ENCODE measurements at regions of chr7 and their contacts with region 1.

Region 1: DNA sequence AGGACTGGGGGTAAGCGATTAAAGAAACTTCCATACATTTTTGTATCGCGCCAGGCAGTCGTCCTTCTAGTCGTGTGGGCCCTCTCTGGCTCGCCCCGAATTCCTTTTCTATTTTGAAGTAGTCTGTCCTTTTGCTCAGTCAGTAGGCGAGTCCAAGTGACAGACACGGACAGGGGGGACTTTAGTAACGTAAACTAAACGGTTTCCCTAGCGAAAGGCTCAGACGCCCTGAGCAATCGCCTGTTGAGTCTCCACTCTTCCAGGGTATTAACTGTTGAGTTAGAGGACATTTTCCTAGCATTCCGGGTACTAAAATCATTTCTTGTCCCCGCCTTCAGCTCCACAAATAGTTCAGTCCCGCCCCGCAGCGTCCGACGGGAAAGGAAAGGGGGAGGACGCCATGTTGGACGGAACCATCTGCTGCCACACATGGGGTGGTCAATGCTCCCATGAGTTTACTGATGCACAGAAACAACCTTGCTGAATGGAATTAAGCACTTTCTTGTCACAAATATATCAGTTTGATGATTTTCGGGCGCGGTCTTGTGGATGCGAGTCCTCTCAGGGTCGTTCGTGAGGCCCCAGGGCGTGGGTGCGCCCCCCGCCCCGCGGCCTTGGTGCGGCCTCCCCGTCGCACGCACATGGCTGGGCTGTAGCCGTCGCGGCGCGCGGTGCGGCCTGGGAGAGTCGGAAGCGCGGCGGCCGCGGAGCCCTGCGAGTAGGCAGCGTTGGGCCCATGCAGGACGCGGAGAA is at the start of gene EIF3B:
- DNase-seq: peak; percentile 87
- H3K4me3 ChIP-seq: peak within 1 kb of the TSS; percentile 100
- H3K27ac ChIP-seq: peak within 1 kb of the TSS; percentile 92
- H3K4me1 ChIP-seq: peaks cover 15% of the 10 kb centered on the region
- H3K27me3 ChIP-seq: no peaks in the 10 kb centered on the region
- CTCF ChIP-seq: no peak
- total RNA-seq, gene EIF3B: 94.4 to 180 TPM

Region 2: GRCh38 chr7:1579481-1580421 is 774.6 kb before region 1 on chr7:
- intact Hi-C with region 1: loop called (anchors 10 kb)
- DNase-seq: peak; percentile 75
- H3K4me3 ChIP-seq: no peak overlapping the region
- H3K27ac ChIP-seq: no peak overlapping the region
- H3K4me1 ChIP-seq: no peaks in the 10 kb centered on the region
- H3K27me3 ChIP-seq: no peaks in the 10 kb centered on the region
- CTCF ChIP-seq: peak; percentile 72

Region 3: GRCh38 chr7:2248984-2249694 is 105.2 kb before region 1 on chr7:
- intact Hi-C with region 1: loop called (anchors 5 kb)
- DNase-seq: peak; percentile 53
- H3K4me3 ChIP-seq: no peak overlapping the region
- H3K27ac ChIP-seq: no peak overlapping the region
- H3K4me1 ChIP-seq: no peaks in the 10 kb centered on the region
- H3K27me3 ChIP-seq: no peaks in the 10 kb centered on the region
- CTCF ChIP-seq: no peak

Region 4: GRCh38 chr7:2431260-2431867 is 77.0 kb after region 1 on chr7:
- intact Hi-C with region 1: no loop called
- DNase-seq: no peak
- H3K4me3 ChIP-seq: no peak overlapping the region
- H3K27ac ChIP-seq: no peak overlapping the region
- H3K4me1 ChIP-seq: no peaks in the 10 kb centered on the region
- H3K27me3 ChIP-seq: no peaks in the 10 kb centered on the region
- CTCF ChIP-seq: peak; percentile 37

Region 5: GRCh38 chr7:2495418-2496299 is 141.3 kb after region 1 on chr7:
- intact Hi-C with region 1: no loop called
- DNase-seq: no peak
- H3K4me3 ChIP-seq: no peak overlapping the region
- H3K27ac ChIP-seq: no peak overlapping the region
- H3K4me1 ChIP-seq: peaks cover 16% of the 10 kb centered on the region
- H3K27me3 ChIP-seq: no peaks in the 10 kb centered on the region
- CTCF ChIP-seq: no peak